Uterus (tissue), 4 donors: ENCODE measurements at regions of chr4 and their contacts with region 1.

Region 1: GRCh38 chr4:88211473-88212252 is 53.2 kb upstream of the ABCG2 start:
- DNase-seq: peak in 1 of 2 donors; percentile 64
- H3K4me3 ChIP-seq: no peak overlapping the region
- H3K27ac ChIP-seq: no peak overlapping the region
- H3K4me1 ChIP-seq: no peaks in the 10 kb centered on the region
- H3K27me3 ChIP-seq: no peaks in the 10 kb centered on the region
- CTCF ChIP-seq: peak; percentile 76 to 84 (median 81)
- POLR2A ChIP-seq: no peak

Region 2: DNA sequence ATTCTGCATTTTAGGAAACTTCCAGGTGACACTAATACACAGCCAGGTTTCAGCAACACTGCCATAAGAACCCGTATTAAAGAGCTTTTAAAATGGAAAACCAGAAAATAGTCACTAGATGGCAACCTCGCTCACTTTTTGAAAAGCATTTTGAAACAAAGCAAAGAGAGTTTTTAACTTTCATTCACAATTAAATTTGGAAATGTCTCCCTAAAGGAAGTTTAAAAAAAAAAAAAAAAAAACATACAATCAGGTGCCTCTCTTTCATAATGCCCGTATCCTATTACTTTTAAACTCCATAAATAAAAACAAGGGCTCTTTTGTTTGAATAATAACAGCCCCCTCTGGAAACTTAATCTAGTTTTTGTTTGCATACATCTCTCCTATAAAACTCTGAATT is 358.6 kb before region 1 on chr4:
- intact Hi-C with region 1: loop called (anchors 5 kb)
- DNase-seq: no peak
- H3K4me3 ChIP-seq: no peak overlapping the region
- H3K27ac ChIP-seq: no peak overlapping the region
- H3K4me1 ChIP-seq: no peaks in the 10 kb centered on the region
- H3K27me3 ChIP-seq: no peaks in the 10 kb centered on the region
- CTCF ChIP-seq: peak; percentile 50 to 67 (median 61)
- POLR2A ChIP-seq: no peak

Region 3: DNA sequence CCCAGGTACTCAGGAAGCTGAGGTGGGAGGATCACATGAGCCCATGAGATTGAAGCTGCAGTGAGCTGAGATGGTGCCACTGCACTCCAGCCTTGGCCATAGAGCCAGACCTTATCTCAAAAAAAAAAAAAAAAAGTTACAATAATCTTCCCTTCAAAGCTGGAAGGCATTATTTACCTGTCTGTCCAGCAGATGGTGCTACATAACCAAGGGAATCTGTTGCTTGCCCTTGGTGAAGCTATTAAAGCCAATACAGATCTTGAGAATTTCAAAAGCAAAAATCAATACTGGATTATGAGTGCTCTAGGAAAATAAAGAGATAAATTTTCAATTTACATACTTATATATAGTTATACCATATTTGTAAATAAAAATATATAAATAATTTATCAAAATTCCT is 178.4 kb before region 1 on chr4:
- intact Hi-C with region 1: loop called (anchors 10 kb)
- DNase-seq: peak in 1 of 2 donors; percentile 48
- H3K4me3 ChIP-seq: no peak overlapping the region
- H3K27ac ChIP-seq: no peak overlapping the region
- H3K4me1 ChIP-seq: peaks cover 0 to 4% of the 10 kb centered on the region in 2 donors
- H3K27me3 ChIP-seq: no peaks in the 10 kb centered on the region
- CTCF ChIP-seq: peak; percentile 61 to 66 (median 62)
- POLR2A ChIP-seq: no peak

Region 4: DNA sequence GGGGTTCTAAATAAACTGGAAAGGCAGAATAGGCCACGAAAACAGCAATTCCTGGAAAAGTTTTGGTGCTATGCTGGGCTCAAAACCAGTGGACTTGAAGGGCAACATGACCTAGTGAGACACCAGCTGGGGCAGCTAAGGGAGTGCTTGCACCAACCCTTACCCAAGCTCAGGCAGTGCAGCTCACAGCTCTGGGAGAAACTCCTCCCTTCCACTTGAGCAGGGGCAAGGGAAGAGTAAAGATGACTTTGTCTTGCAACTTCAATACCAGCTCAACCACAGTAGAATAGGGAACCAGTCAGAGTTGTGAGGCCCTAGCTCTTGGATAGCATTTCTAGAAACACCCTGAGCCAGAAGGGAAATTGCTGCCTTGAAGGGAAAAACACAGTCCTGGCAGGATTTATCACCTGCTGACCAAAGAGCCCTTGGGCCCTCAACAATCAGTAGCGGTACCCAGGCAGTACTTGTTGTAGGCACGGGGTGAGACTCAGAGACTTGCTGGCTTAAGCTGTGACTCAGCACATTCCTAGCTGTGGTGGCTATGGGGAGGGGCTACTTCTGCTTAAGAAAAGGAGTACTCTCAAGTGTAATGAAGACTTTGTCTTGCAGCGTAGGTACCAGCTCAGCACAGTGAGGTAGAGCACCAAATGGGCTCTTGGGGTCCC is 33.6 kb before region 1 on chr4:
- intact Hi-C with region 1: no loop called
- DNase-seq: no peak
- H3K4me3 ChIP-seq: no peak overlapping the region
- H3K27ac ChIP-seq: peak overlapping the region in 1 of 2 donors; percentile 60
- H3K4me1 ChIP-seq: no peaks in the 10 kb centered on the region
- H3K27me3 ChIP-seq: no peaks in the 10 kb centered on the region
- CTCF ChIP-seq: no peak
- POLR2A ChIP-seq: no peak

Region 5: GRCh38 chr4:88489100-88489761 is 277.6 kb after region 1 on chr4:
- intact Hi-C with region 1: no loop called
- DNase-seq: no peak
- H3K4me3 ChIP-seq: no peak overlapping the region
- H3K27ac ChIP-seq: no peak overlapping the region
- H3K4me1 ChIP-seq: no peaks in the 10 kb centered on the region
- H3K27me3 ChIP-seq: no peaks in the 10 kb centered on the region
- CTCF ChIP-seq: no peak
- POLR2A ChIP-seq: no peak